ENCODE measurements at regions of chr3 and their contacts with region 1.

Region 1: GRCh38 chr3:194306109-194306686 is 44.9 kb downstream of the CPN2 start:
- DNase-seq: no peak
- H3K4me3 ChIP-seq: no peak overlapping the region
- H3K27ac ChIP-seq: no peak overlapping the region
- H3K4me1 ChIP-seq: peaks cover 11% of the 10 kb centered on the region
- H3K27me3 ChIP-seq: no peaks in the 10 kb centered on the region
- CTCF ChIP-seq: no peak

Region 2: GRCh38 chr3:193470710-193471109 is 835.5 kb before region 1 on chr3:
- CTCF ChIA-PET with region 1: no interaction called
- dilution Hi-C with region 1: no loop called
- in situ Hi-C with region 1: no loop called
- intact Hi-C with region 1: no loop called
- DNase-seq: no peak
- H3K4me3 ChIP-seq: no peak overlapping the region
- H3K27ac ChIP-seq: no peak overlapping the region
- H3K4me1 ChIP-seq: no peaks in the 10 kb centered on the region
- H3K27me3 ChIP-seq: peaks cover 4% of the 10 kb centered on the region
- CTCF ChIP-seq: no peak

Region 3: DNA sequence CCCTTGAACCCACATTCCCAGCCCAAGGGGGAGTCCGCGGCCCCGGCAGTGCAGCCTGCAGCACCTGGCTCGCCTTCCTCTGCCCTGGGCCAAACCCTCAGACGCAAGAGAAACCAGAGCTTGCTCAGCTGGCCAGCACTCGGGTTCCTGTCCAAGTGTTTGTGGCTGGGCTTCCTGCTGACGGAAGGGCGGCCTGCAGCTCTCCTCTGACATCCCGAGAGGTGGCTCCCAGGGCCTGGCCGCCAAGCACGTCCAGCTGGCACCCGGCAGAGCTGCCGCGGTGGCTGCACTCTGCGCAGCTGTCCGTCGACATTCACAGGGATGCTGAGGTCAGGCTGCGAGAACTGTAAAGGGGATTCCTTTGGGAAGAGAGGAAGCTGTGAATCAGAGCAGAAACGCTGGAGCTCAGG is 40.7 kb before region 1 on chr3:
- CTCF ChIA-PET with region 1: no interaction called
- dilution Hi-C with region 1: loop called (anchors 5 kb)
- in situ Hi-C with region 1: no loop called
- intact Hi-C with region 1: no loop called
- DNase-seq: peak; percentile 72
- H3K4me3 ChIP-seq: peak overlapping the region in 1 of 3 experiments; percentile 5
- H3K27ac ChIP-seq: no peak overlapping the region
- H3K4me1 ChIP-seq: peaks cover 17% of the 10 kb centered on the region
- H3K27me3 ChIP-seq: no peaks in the 10 kb centered on the region
- CTCF ChIP-seq: no peak

Region 4: GRCh38 chr3:194956697-194957396 is 650.6 kb after region 1 on chr3:
- CTCF ChIA-PET with region 1: no interaction called
- dilution Hi-C with region 1: no loop called
- in situ Hi-C with region 1: no loop called
- intact Hi-C with region 1: no loop called
- DNase-seq: no peak
- H3K4me3 ChIP-seq: no peak overlapping the region
- H3K27ac ChIP-seq: no peak overlapping the region
- H3K4me1 ChIP-seq: no peaks in the 10 kb centered on the region
- H3K27me3 ChIP-seq: no peaks in the 10 kb centered on the region
- CTCF ChIP-seq: no peak

Measured in mammary epithelial cell (primary cell).